CD4-positive, alpha-beta T cell (primary cell): ENCODE measurements at regions of chr9 and their contacts with region 1.

Region 1: DNA sequence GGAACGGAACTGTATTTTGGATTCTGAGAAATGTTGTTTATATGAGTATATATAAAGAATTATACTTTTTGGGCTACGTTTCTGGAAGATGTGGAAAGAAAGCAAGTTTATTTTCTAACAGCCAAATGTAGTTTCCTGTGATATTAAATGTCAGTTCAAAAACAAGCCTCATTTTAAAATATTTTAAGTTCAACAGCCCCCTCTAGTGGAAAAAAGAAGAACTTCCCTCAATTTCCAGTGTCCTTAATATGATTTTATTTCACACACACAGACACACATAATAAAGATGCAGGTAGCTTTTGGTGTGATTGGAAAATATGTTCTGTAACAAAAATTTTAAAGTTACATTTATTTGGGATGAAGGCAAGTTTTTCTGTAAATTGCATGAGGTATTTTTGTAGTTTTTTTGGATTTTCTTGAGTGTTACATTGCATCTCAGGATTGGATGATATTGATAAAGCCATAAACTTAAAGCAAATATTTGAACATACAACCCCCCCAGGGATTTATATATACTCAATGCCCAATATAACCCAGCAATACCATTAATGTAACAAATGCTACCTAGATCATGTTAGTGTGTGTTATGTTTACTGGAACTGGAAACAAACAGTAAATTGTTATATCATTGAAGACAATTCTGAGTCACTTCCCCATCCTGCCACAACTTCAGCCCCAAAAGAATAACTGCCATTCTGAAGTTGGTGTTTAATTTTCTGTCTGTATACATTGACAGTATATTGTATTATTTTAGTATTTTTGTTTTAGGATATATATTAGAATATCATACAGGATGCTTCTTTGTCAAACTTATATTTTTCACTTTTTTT is 54.0 kb downstream of the CCDC171 start:
- DNase-seq: peak in 4 of 14 experiments; percentile 13 to 68 (median 62)
- ATAC-seq: no peak
- H3K4me3 ChIP-seq: no peak overlapping the region
- H3K4me3 Mint-ChIP-seq: no peak overlapping the region
- H3K27ac ChIP-seq: no peak overlapping the region
- H3K27ac Mint-ChIP-seq: no peak overlapping the region
- H3K4me1 ChIP-seq: no peaks in the 10 kb centered on the region
- H3K4me1 Mint-ChIP-seq: no peaks in the 10 kb centered on the region
- H3K27me3 ChIP-seq: no peaks in the 10 kb centered on the region
- H3K27me3 Mint-ChIP-seq: no peaks in the 10 kb centered on the region
- CTCF ChIP-seq: peak; percentile 76

Region 2: GRCh38 chr9:15104826-15105420 is 501.9 kb before region 1 on chr9:
- CTCF ChIA-PET with region 1: no interaction called
- POLR2A ChIA-PET with region 1: no interaction called
- intact Hi-C with region 1: loop called (anchors 2 to 10 kb)
- DNase-seq: peak in 12 of 14 experiments; percentile 3 to 67 (median 22)
- ATAC-seq: peak; percentile 93
- H3K4me3 ChIP-seq: no peak overlapping the region
- H3K4me3 Mint-ChIP-seq: no peak overlapping the region
- H3K27ac ChIP-seq: no peak overlapping the region
- H3K27ac Mint-ChIP-seq: no peak overlapping the region
- H3K4me1 ChIP-seq: no peaks in the 10 kb centered on the region
- H3K4me1 Mint-ChIP-seq: no peaks in the 10 kb centered on the region
- H3K27me3 ChIP-seq: no peaks in the 10 kb centered on the region
- H3K27me3 Mint-ChIP-seq: peaks cover 4% of the 10 kb centered on the region
- CTCF ChIP-seq: peak; percentile 89

Region 3: DNA sequence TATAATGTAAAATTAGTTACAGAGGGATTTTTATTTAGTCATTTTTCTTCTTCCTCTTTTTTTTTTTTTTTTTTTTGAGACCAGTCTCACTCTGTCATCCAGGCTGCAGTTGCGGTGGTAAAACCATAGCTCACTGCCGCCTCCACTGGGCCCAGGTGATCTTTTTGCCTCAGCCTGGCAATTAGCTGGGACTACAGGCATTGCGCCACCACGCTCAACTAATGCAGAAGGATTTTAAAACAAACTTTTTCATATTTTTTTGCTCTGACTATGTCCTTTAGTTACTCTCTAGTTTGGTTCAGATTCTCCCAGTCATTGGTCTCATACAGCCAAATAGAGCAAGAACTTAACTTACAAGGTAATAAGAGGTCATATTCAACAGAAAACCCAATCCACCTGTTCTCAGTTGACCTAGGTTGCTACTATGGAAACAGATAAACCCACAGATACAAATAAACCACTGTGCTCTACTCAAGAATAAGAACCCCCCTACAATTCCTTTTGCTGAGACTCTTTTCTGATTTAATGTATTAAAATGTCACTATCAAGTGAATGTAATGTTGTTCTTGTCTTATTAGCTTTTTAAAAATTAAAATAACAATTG is 249.7 kb before region 1 on chr9:
- CTCF ChIA-PET with region 1: no interaction called
- POLR2A ChIA-PET with region 1: no interaction called
- intact Hi-C with region 1: loop called in 1 of 2 experiments (anchors 5 kb)
- DNase-seq: peak in 13 of 14 experiments; percentile 14 to 76 (median 36)
- ATAC-seq: peak; percentile 84
- H3K4me3 ChIP-seq: no peak overlapping the region
- H3K4me3 Mint-ChIP-seq: no peak overlapping the region
- H3K27ac ChIP-seq: no peak overlapping the region
- H3K27ac Mint-ChIP-seq: peak overlapping the region; percentile 10
- H3K4me1 ChIP-seq: peaks cover 4% of the 10 kb centered on the region
- H3K4me1 Mint-ChIP-seq: peaks cover 23% of the 10 kb centered on the region
- H3K27me3 ChIP-seq: no peaks in the 10 kb centered on the region
- H3K27me3 Mint-ChIP-seq: no peaks in the 10 kb centered on the region
- CTCF ChIP-seq: no peak

Region 4: GRCh38 chr9:15422372-15423230 is 184.3 kb before region 1 on chr9 and contains the start of gene SNAPC3:
- CTCF ChIA-PET with region 1: no interaction called
- POLR2A ChIA-PET with region 1: no interaction called
- intact Hi-C with region 1: loop called in 1 of 2 experiments (anchors 2 kb)
- DNase-seq: peak; percentile 82 to 96 (median 90)
- ATAC-seq: peak; percentile 97
- H3K4me3 ChIP-seq: peak within 1 kb of the TSS; percentile 89
- H3K4me3 Mint-ChIP-seq: peak within 1 kb of the TSS; percentile 96
- H3K27ac ChIP-seq: peak within 1 kb of the TSS; percentile 70 to 82
- H3K27ac Mint-ChIP-seq: peak within 1 kb of the TSS; percentile 96
- H3K4me1 ChIP-seq: peaks cover 21% of the 10 kb centered on the region
- H3K4me1 Mint-ChIP-seq: peaks cover 51% of the 10 kb centered on the region
- H3K27me3 ChIP-seq: no peaks in the 10 kb centered on the region
- H3K27me3 Mint-ChIP-seq: no peaks in the 10 kb centered on the region
- CTCF ChIP-seq: no peak
- total RNA-seq, gene SNAPC3: 3.3 to 4.7 TPM

Region 5: GRCh38 chr9:15485836-15486666 is 120.8 kb before region 1 on chr9:
- CTCF ChIA-PET with region 1: no interaction called
- POLR2A ChIA-PET with region 1: no interaction called
- intact Hi-C with region 1: loop called in 1 of 2 experiments (anchors 2 kb)
- DNase-seq: peak in 3 of 14 experiments; percentile 33 to 54 (median 50)
- ATAC-seq: peak; percentile 70
- H3K4me3 ChIP-seq: no peak overlapping the region
- H3K4me3 Mint-ChIP-seq: no peak overlapping the region
- H3K27ac ChIP-seq: no peak overlapping the region
- H3K27ac Mint-ChIP-seq: peak overlapping the region; percentile 24
- H3K4me1 ChIP-seq: no peaks in the 10 kb centered on the region
- H3K4me1 Mint-ChIP-seq: peaks cover 49% of the 10 kb centered on the region
- H3K27me3 ChIP-seq: no peaks in the 10 kb centered on the region
- H3K27me3 Mint-ChIP-seq: no peaks in the 10 kb centered on the region
- CTCF ChIP-seq: peak; percentile 61

Region 6: DNA sequence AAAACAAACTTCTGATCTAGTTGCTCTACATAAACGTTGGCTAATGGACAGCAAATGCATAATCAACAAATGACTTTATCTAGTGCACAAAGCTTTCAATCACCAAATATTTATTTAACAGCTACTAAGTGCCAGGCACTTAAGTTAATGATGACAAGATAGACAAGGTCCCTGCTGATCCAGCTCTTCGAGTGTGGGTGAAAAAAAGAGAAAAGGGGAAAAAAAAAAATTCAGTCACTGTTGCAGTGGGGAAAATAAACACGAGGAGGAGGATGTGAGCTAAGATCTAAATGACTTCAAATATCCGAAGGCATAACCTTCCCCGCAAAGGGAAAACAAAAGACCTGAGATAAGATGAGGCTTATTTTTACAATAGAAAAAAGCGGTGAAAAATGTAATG is 105.7 kb before region 1 on chr9:
- CTCF ChIA-PET with region 1: no interaction called
- POLR2A ChIA-PET with region 1: no interaction called
- intact Hi-C with region 1: loop called (anchors 2 to 5 kb)
- DNase-seq: peak in 2 of 14 experiments; percentile 33 to 42
- ATAC-seq: peak; percentile 45
- H3K4me3 ChIP-seq: no peak overlapping the region
- H3K4me3 Mint-ChIP-seq: peak overlapping the region; percentile 46
- H3K27ac ChIP-seq: no peak overlapping the region
- H3K27ac Mint-ChIP-seq: peak overlapping the region; percentile 67
- H3K4me1 ChIP-seq: peaks cover 27% of the 10 kb centered on the region
- H3K4me1 Mint-ChIP-seq: peaks cover 75% of the 10 kb centered on the region
- H3K27me3 ChIP-seq: no peaks in the 10 kb centered on the region
- H3K27me3 Mint-ChIP-seq: no peaks in the 10 kb centered on the region
- CTCF ChIP-seq: no peak

Region 7: DNA sequence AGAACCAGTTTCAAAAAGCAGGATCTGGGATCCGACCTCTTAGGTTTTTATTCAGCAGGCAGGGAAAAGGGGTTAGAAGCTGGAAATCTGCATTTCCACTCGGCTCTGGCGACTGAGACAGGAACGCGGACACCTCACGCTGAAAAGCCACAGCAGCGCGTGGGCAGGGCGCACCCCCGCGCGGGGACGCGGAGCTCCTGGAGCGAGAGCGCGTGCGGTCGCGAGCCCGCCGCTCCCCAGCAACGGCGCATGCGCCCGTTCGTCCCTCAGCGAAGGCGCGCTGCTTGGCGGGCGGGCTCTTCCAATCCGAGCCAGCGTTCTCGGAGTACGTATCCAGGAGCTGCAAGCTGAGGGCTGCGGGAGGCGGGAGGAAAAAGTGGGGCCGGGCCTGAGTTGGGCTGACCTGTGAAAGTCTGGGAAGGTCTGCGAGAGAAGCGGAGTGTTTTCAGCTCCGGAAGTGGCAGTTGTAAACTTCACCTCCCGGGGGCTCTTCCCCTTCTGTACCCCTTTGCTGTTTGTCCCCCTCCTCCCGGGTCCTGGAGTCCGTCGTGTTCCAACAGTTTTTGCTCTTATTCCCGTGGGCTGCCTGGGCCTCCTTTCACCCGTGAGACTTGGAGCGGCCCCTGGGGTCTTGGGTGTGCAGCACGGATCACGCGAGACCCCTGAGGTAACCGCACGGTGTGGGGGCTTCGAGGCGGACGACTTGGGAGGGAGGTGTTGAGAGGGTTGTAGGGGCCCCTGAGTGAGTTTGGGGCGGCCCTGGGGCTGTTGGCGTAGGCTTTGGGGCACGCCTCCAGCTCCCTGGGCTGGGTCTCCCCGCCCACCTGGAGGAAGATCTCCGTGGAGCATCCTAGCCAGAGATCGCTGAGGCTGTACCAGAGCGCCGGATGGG is 54.0 kb before region 1 on chr9 and contains the start of gene CCDC171:
- CTCF ChIA-PET with region 1: interaction called, 6 read pairs
- POLR2A ChIA-PET with region 1: no interaction called
- intact Hi-C with region 1: loop called (anchors 5 kb)
- DNase-seq: peak; percentile 70 to 96 (median 80)
- ATAC-seq: peak; percentile 85
- H3K4me3 ChIP-seq: peak within 1 kb of the TSS; percentile 97
- H3K4me3 Mint-ChIP-seq: peak within 1 kb of the TSS; percentile 95
- H3K27ac ChIP-seq: no peak within 1 kb of the TSS
- H3K27ac Mint-ChIP-seq: peak within 1 kb of the TSS; percentile 80
- H3K4me1 ChIP-seq: peaks cover 21% of the 10 kb centered on the region
- H3K4me1 Mint-ChIP-seq: peaks cover 15% of the 10 kb centered on the region
- H3K27me3 ChIP-seq: no peaks in the 10 kb centered on the region
- H3K27me3 Mint-ChIP-seq: no peaks in the 10 kb centered on the region
- CTCF ChIP-seq: no peak
- total RNA-seq, gene CCDC171: 0.49 to 1.1 TPM